SK-N-SH (cell line): ENCODE measurements at regions of chr15 and their contacts with region 1.

Region 1: DNA sequence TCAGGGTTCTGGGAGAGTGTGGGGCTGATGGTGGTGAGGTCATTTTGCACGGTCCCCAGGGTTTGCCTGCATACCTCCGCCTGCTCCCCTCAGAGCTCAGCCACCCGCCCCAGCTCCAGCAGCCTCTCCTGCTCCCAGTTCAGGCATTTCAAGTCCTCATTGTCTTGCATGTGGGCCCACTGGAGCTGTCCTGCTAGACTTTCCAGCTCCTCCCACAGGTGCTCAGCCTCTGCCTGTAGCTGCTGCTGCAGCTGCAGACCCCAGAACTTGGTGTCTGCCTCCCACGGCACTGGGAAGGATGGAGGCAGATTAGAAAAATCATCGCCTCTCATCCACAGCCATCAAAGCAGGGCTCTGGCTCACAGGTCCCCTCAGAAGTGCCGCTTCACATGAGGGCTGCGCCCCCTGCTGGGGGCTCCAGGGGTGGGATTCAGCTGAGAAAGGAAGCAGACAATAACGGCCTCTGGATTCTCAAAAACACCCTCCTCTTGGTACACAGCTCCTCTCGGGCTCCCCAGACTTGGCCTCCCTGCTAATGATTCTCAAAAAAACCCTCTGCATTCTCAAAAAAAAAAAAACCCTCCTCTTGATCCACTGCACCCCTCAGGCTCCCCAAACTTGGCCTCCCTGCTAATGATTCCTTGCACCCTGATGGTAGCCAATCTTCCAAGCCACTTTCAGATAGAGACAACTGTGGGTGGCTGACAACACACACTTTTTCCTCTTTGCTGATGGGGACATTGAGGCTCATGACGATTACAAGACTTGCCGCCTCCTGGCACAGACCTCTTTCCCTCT is 89.3 kb upstream of the C2CD4B start:
- DNase-seq: peak; percentile 76
- H3K4me3 ChIP-seq: no peak overlapping the region; a peak in 1 of 4 replicates
- H3K27ac ChIP-seq: no peak overlapping the region
- H3K4me1 ChIP-seq: no peaks in the 10 kb centered on the region
- H3K27me3 ChIP-seq: no peaks in the 10 kb centered on the region; the same call in 1 of the 2 replicates
- CTCF ChIP-seq: peak; percentile 66
- EP300 ChIP-seq: no peak
- RAD21 ChIP-seq: peak; percentile 82

Region 2: DNA sequence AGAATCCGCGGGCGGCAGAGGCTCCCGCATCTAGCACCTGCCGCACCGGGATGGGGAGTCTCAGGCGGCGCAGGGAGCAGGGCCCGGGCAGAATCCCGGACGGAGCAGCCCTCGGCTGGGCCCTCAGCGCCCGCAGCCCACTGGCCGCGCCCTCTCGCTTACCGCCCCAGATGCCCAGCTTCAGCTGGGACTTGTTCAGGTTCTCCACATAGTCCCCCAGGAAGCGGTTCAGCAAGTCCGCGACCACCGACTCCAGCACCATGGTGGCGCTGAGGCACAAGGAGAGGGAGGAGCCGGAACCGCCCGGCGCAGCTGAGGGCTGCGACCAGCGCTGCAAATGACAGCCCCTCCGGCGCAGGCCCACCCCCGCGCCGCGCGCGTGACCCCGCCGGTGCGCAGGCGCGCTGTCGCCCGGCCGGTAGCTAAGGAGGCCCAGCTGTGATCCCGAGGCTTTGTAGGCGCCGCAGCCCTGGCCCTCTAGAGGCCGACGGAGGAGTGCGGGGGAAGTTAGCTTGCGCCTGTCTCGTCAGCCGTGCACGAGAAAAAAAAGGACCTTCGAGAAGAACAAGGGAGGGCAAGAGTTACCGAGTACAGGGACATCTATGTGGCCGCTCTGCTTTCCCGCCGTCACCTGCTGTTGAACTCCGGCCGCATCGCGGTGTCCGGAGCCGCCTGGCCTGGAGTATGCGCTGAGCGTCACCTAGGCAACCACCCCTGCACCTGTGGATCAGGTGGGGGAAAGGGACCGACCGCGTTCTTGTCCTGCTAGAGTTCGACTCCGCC is 194.0 kb before region 1 on chr15 and contains the start of gene VPS13C:
- CTCF ChIA-PET with region 1: interaction called, 12 read pairs
- POLR2A ChIA-PET with region 1: no interaction called
- DNase-seq: peak; percentile 98
- H3K4me3 ChIP-seq: peak within 1 kb of the TSS; percentile 74 to 92
- H3K27ac ChIP-seq: peak within 1 kb of the TSS; percentile 76 to 91
- H3K4me1 ChIP-seq: peaks cover 0 to 7% of the 10 kb centered on the region in 2 experiments; a peak in 2 of 4 replicates
- H3K27me3 ChIP-seq: no peaks in the 10 kb centered on the region
- CTCF ChIP-seq: peak; percentile 75
- EP300 ChIP-seq: 0 out of 4 replicates have a peak, but pooled peaks of 1 of the 2 experiments have one; percentile 12
- RAD21 ChIP-seq: peak; percentile 66
- polyA plus RNA-seq, gene VPS13C: 5.7 and 6.9 TPM in 2 replicates

Region 3: DNA sequence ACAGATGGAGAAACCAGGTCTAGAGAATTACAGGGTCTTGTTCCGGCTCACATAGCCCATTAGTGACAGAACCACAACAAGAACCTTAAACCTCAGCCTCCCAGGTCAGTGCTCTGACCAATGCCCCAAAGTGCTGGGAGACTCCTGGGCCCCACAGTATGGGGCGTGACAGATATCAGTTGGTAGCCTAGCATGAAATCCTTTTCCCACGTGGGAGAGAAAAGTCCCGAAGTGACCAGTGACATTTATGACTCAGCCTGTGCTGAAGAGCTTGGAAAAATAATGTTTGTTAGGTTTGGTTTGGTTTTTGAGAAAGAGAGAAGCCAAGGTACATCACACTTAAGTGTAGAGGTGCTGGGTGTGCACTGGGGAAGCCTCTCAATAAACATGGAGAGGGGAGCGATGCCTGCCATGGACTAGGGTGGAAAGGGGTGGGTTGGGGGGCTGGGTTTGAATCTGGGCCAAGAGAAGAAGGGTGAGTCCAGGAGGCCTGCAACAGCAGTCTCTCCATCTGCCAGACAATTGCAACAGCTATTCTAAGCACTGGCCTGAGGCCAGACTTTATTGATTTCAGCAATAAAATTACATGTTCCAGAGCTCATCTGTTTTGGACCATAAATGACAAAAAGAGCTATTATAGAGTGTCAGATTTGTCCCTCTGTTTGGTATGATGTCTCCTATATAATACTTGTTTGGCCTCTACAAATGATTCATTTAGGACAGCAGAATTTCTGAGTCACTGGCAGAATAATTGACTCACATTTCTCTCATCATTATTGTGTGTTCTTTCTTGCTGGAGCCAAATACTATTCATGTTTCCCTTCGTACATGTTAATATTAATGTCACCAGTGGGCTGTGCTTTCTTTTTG is 144.1 kb before region 1 on chr15:
- CTCF ChIA-PET with region 1: interaction called, 13 read pairs
- POLR2A ChIA-PET with region 1: no interaction called
- DNase-seq: peak; percentile 77
- H3K4me3 ChIP-seq: no peak overlapping the region
- H3K27ac ChIP-seq: peak overlapping the region; percentile 77 to 99
- H3K4me1 ChIP-seq: peaks cover 16 to 38% of the 10 kb centered on the region in 2 experiments
- H3K27me3 ChIP-seq: no peaks in the 10 kb centered on the region
- CTCF ChIP-seq: no peak
- EP300 ChIP-seq: peak; percentile 19 to 98; a peak in 3 of 4 replicates
- RAD21 ChIP-seq: peak; percentile 19

Region 4: DNA sequence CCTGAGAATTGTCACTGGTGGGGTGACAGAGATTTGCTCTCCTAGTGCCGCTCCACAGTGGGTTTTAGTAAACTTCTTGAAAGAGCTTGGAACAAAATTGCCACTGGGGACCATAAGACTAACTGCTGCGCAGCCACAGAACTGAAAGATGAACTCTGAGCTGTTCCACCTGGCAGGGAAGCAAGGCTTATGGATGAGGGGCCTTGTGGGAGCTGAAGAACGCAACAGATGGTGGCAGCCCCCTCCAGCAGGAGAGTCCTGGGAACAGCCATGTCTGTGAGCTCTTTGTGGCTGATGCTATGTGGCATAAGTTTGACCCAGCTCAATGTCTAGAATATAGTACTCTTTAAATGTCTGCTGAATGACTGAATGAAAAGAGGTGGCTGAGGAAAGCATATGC is 22.5 kb before region 1 on chr15:
- CTCF ChIA-PET with region 1: interaction called, 10 read pairs
- POLR2A ChIA-PET with region 1: no interaction called
- DNase-seq: no peak
- H3K4me3 ChIP-seq: no peak overlapping the region
- H3K27ac ChIP-seq: no peak overlapping the region
- H3K4me1 ChIP-seq: no peaks in the 10 kb centered on the region
- H3K27me3 ChIP-seq: no peaks in the 10 kb centered on the region; the same call in 1 of the 2 replicates
- CTCF ChIP-seq: no peak
- EP300 ChIP-seq: no peak
- RAD21 ChIP-seq: no peak

Region 5: DNA sequence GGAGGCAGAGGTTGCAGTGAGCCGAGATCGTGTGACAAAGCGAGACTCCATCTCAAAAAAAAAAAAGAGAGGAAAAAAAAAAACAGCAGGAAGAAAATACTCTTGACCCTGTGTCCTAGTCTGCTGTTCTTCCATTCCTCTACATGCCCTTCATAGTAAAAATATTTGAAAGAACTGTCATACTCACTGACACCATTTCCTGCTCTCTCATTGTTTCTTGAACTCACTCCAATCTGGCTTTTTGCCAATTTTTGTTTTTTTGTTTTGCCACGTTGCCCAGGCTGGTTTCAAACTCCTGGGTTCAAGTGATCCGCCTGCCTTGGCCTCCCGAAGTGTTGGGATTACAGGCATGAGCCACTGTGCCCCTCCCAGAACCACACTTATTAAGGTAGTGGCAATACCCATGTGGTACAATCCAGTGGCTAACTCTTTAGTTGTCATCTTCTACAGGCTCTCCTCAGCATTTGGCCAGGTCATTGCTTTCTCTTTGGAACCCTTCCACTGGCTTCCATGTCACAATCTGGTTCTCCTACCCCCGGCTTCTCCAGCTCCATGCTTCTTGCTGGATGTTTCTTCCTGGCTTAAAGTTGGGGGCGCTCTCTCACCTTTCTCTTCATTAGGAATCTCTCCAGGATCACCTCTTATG is 149.0 kb after region 1 on chr15:
- CTCF ChIA-PET with region 1: no interaction called
- POLR2A ChIA-PET with region 1: no interaction called
- DNase-seq: no peak
- H3K4me3 ChIP-seq: no peak overlapping the region
- H3K27ac ChIP-seq: peak overlapping the region in 1 of 2 experiments; percentile 48; a peak in 2 of 4 replicates
- H3K4me1 ChIP-seq: peaks cover 5 to 7% of the 10 kb centered on the region in 2 experiments; a peak in 2 of 4 replicates
- H3K27me3 ChIP-seq: no peaks in the 10 kb centered on the region
- CTCF ChIP-seq: no peak
- EP300 ChIP-seq: peak in 1 of 2 experiments; percentile 38; a peak in 1 of 4 replicates
- RAD21 ChIP-seq: no peak